Caco-2 (cell line): ENCODE measurements at regions of chr20 and their contacts with region 1.

Region 1: DNA sequence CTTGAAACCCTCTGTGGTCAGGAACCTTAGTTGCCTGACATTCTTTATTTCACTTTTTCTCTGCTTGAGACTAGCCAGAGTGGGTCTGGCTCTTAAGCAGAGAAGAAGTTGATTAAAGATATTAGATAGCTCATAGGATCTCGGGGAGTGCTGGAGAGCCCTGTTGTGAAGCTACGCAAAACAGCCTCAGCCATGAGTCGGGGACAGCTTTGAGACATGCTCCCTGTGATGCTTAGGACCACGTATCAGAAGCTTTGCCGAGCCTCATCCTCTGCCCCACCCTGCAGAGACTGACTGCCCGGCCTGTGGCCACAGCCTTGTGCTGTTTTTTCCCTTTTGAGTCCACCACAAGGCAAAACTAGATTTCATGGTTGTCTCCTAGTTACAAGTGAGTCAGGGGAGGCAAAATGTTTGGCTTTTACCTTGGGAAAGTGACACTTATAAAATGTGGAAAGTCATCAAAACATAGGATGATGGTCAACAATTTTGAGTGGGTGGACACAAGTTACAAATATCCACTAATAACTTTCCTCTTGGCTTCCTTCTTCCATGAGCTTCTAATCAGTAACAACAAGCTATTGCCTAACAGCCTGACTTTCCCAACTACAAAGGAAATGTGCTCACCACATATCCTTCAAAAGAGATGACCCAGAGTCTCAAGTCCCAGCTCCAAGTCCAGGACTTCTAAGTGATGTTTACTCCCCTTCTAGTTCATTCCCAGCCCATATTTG is 108.4 kb downstream of the JAG1 start:
- DNase-seq: peak in 1 of 2 experiments; percentile 50
- H3K4me3 ChIP-seq: no peak overlapping the region
- H3K4me3 Mint-ChIP-seq: no peak overlapping the region
- H3K27ac Mint-ChIP-seq: peak overlapping the region; percentile 13
- H3K4me1 ChIP-seq: peaks cover 40% of the 10 kb centered on the region
- H3K4me1 Mint-ChIP-seq: peaks cover 10% of the 10 kb centered on the region
- H3K27me3 ChIP-seq: no peaks in the 10 kb centered on the region
- H3K27me3 Mint-ChIP-seq: no peaks in the 10 kb centered on the region
- CTCF ChIP-seq: no peak

Region 2: GRCh38 chr20:10597637-10598036 is 32.3 kb after region 1 on chr20:
- CTCF ChIA-PET with region 1: no interaction called
- POLR2A ChIA-PET with region 1: no interaction called
- intact Hi-C with region 1: loop called (anchors 2 kb)
- DNase-seq: no peak
- H3K4me3 ChIP-seq: no peak overlapping the region
- H3K4me3 Mint-ChIP-seq: no peak overlapping the region
- H3K27ac Mint-ChIP-seq: no peak overlapping the region
- H3K4me1 ChIP-seq: peaks cover 10% of the 10 kb centered on the region; the same call in 1 of the 2 replicates
- H3K4me1 Mint-ChIP-seq: peaks cover 8% of the 10 kb centered on the region
- H3K27me3 ChIP-seq: no peaks in the 10 kb centered on the region
- H3K27me3 Mint-ChIP-seq: no peaks in the 10 kb centered on the region
- CTCF ChIP-seq: no peak

Region 3: GRCh38 chr20:10654630-10655029 is 89.3 kb after region 1 on chr20:
- CTCF ChIA-PET with region 1: no interaction called
- POLR2A ChIA-PET with region 1: no interaction called
- intact Hi-C with region 1: no loop called
- DNase-seq: peak; percentile 23 to 57
- H3K4me3 ChIP-seq: no peak overlapping the region
- H3K4me3 Mint-ChIP-seq: no peak overlapping the region
- H3K27ac Mint-ChIP-seq: peak overlapping the region; percentile 78
- H3K4me1 ChIP-seq: peaks cover 42% of the 10 kb centered on the region
- H3K4me1 Mint-ChIP-seq: peaks cover 41% of the 10 kb centered on the region
- H3K27me3 ChIP-seq: no peaks in the 10 kb centered on the region
- H3K27me3 Mint-ChIP-seq: no peaks in the 10 kb centered on the region
- CTCF ChIP-seq: no peak

Region 4: DNA sequence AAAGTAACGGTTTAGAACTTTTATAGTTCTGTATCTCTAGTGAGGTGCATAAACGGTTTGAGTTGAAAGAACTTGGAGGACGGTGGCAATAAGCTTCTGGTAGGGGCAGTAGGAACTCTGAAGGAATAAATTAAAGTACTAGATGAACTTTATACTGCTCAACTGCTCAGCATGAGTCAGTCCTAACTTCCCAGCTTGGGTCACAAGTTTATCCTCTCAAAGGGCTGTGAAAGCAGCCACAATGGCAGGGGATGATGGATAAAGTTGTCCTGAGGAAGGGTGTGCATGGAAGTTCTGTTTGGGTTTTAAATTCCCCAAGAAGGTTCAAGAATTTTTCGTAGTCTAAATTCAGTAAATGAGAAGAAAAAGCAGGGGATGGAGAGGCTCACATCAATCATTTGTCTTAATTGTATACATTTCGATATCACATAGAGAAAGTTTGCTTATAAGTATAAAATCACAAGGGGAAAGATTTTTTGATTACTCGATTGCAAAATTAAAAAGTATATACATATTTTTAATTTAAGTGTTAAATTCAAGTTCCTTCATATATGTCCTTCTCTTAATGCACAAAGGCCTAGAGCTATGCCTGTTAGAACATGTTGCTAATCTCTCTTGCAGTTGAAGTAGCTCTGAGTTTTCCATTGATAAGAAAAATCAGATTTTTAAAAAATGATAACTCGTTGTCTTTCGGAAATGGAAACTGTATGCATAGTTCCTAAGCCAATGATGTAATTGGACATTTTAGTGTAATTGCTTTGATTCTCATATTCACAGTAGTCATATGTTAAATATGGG is 163.7 kb after region 1 on chr20:
- CTCF ChIA-PET with region 1: no interaction called
- POLR2A ChIA-PET with region 1: no interaction called
- intact Hi-C with region 1: no loop called
- DNase-seq: no peak
- H3K4me3 ChIP-seq: no peak overlapping the region
- H3K4me3 Mint-ChIP-seq: no peak overlapping the region
- H3K27ac Mint-ChIP-seq: no peak overlapping the region
- H3K4me1 ChIP-seq: no peaks in the 10 kb centered on the region
- H3K4me1 Mint-ChIP-seq: no peaks in the 10 kb centered on the region
- H3K27me3 ChIP-seq: no peaks in the 10 kb centered on the region
- H3K27me3 Mint-ChIP-seq: no peaks in the 10 kb centered on the region
- CTCF ChIP-seq: no peak

Region 5: GRCh38 chr20:11454966-11455799 is 889.8 kb after region 1 on chr20:
- CTCF ChIA-PET with region 1: no interaction called
- POLR2A ChIA-PET with region 1: no interaction called
- intact Hi-C with region 1: loop called (anchors 5 kb)
- DNase-seq: peak; percentile 82 to 92
- H3K4me3 ChIP-seq: peak overlapping the region; percentile 23
- H3K4me3 Mint-ChIP-seq: peak overlapping the region; percentile 73
- H3K27ac Mint-ChIP-seq: peak overlapping the region; percentile 92
- H3K4me1 ChIP-seq: peaks cover 69% of the 10 kb centered on the region
- H3K4me1 Mint-ChIP-seq: peaks cover 63% of the 10 kb centered on the region
- H3K27me3 ChIP-seq: no peaks in the 10 kb centered on the region
- H3K27me3 Mint-ChIP-seq: no peaks in the 10 kb centered on the region
- CTCF ChIP-seq: no peak